BJ (cell line): ENCODE measurements at regions of chr22 and their contacts with region 1.

Region 1: GRCh38 chr22:46542011-46542985 is 4.9 kb upstream of the CELSR1 start:
- DNase-seq: no peak
- H3K4me3 ChIP-seq: no peak overlapping the region
- H3K27me3 ChIP-seq: no peaks in the 10 kb centered on the region
- CTCF ChIP-seq: peak; percentile 99

Region 2: GRCh38 chr22:46355371-46355995 is 186.8 kb before region 1 on chr22:
- CTCF ChIA-PET with region 1: interaction called, 29 read pairs
- POLR2A ChIA-PET with region 1: no interaction called
- DNase-seq: no peak
- H3K4me3 ChIP-seq: no peak overlapping the region
- H3K27me3 ChIP-seq: no peaks in the 10 kb centered on the region
- CTCF ChIP-seq: peak; percentile 87